IMR-90 (cell line): ENCODE measurements at regions of chr7 and their contacts with region 1.

Region 1: GRCh38 chr7:92391071-92391470 is 56.2 kb upstream of the GATAD1 start:
- DNase-seq: no peak
- ATAC-seq: no peak
- H3K4me3 ChIP-seq: no peak overlapping the region
- H3K27ac ChIP-seq: no peak overlapping the region
- H3K4me1 ChIP-seq: no peaks in the 10 kb centered on the region
- H3K27me3 ChIP-seq: no peaks in the 10 kb centered on the region
- CTCF ChIP-seq: no peak
- POLR2A ChIP-seq: no peak
- RAD21 ChIP-seq: no peak

Region 2: GRCh38 chr7:92375013-92375412 is 16.1 kb before region 1 on chr7:
- CTCF ChIA-PET with region 1: interaction called, 5 read pairs
- POLR2A ChIA-PET with region 1: no interaction called
- dilution Hi-C with region 1: no loop called
- in situ Hi-C with region 1: no loop called
- intact Hi-C with region 1: loop called (anchors 2 kb)
- DNase-seq: peak; percentile 33
- ATAC-seq: peak; percentile 73
- H3K4me3 ChIP-seq: no peak overlapping the region
- H3K27ac ChIP-seq: no peak overlapping the region
- H3K4me1 ChIP-seq: no peaks in the 10 kb centered on the region
- H3K27me3 ChIP-seq: no peaks in the 10 kb centered on the region
- CTCF ChIP-seq: no peak
- POLR2A ChIP-seq: no peak
- RAD21 ChIP-seq: no peak

Region 3: DNA sequence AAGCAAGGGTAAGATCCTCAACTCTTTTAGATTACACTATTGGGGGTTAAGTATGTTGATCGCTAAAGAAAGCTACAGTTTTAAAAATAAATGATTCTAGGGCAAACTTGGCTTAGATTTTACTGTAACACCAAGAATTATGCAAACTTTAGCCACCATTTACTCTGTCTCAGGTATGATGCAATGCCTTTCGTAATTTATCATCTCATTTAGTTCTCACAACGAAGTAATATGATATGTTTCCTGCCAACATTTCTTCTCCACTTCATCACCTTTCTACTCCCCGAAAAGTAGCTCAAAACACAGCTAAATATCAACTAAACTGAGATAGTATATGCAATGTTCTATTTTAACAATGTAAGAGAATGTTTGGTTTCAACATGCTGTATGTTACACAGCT is 178.1 kb after region 1 on chr7:
- CTCF ChIA-PET with region 1: no interaction called
- POLR2A ChIA-PET with region 1: no interaction called
- dilution Hi-C with region 1: no loop called
- in situ Hi-C with region 1: no loop called
- intact Hi-C with region 1: no loop called
- DNase-seq: peak; percentile 29
- ATAC-seq: no peak
- H3K4me3 ChIP-seq: no peak overlapping the region
- H3K27ac ChIP-seq: no peak overlapping the region
- H3K4me1 ChIP-seq: no peaks in the 10 kb centered on the region
- H3K27me3 ChIP-seq: no peaks in the 10 kb centered on the region
- CTCF ChIP-seq: no peak
- POLR2A ChIP-seq: no peak
- RAD21 ChIP-seq: no peak